Colonic mucosa (tissue), 4 donors: ENCODE measurements at regions of chr5 and their contacts with region 1.

Region 1: DNA sequence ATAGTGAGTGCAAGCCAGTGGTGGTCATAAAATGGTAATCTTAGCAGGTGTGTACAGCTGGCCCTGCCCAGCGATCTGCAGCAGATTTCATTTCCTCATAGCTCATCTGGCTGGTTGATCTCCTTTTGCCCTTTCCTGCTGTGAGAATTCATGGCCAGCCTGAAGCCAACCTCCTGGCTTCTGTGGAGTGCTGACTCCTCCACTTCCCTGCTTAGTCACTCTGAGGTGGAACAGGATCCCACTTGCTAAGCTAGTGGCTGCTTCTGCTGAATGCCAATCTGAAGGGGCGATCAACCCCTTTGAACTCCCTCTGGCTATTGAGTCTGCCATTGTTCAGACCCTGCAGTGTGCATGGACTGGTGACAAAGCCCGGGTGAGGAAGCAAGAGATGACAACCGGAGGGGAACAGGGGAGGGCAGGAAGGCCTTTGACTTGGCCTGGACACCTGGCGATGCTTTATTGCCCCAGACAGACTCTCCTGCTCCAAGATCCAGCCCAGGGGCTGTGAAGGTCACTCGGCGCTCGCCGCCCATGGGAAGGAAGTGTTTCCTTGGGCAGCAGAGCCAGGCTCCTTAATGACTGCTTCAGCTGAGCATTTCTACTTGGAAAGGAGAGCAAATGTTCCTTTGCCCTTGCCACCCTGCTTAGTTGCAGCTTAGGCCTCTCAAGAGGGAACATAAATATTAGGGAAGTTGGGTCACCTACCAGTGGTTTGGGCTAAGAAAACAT is 341.1 kb downstream of the ZSWIM6 start:
- DNase-seq: peak; percentile 71
- H3K4me3 ChIP-seq: no peak overlapping the region
- H3K27ac ChIP-seq: peak overlapping the region; percentile 78
- H3K4me1 ChIP-seq: peaks cover 12% of the 10 kb centered on the region
- H3K27me3 ChIP-seq: no peaks in the 10 kb centered on the region
- CTCF ChIP-seq: no peak

Region 2: DNA sequence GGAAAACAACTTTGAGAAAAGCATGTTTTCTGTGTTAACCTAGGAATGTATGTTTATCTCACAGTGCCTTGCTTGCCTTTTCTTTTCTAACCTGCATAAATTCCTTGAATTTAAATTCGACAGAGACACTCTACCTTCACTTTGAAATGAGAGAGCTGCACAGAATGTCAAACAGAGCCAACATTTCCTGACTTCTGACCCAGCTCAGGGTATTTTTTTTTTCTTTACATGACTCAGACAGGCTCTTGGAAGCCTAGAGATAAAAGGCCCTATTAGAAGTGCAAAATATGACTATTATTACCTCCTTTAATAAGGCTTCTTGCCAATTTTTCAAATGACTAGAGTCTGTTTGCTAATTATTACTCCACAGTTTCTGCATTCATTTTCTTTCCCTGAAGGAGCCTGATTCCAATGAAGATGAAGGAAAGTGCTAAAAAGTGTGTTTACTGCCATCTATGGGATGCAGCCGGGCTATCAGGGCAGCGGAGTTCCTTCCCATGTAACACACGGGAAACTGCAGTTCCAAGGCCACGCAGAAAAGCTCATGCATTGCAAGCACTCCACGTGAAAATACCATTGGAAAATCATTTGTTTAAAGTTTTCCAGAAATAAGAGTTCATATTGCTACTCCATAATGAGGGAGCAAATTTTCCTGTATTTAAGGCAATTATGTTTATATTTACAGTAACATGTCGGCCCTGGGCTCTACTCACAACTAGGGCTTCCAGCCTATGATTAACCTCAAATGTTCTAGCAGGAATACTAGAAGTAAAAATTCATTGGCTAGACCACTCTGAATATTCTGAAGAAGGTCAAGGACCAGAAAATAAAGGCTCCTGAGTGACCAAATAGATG is 144.5 kb after region 1 on chr5:
- intact Hi-C with region 1: loop called (anchors 10 kb)
- DNase-seq: peak; percentile 31
- H3K4me3 ChIP-seq: no peak overlapping the region
- H3K27ac ChIP-seq: no peak overlapping the region
- H3K4me1 ChIP-seq: no peaks in the 10 kb centered on the region
- H3K27me3 ChIP-seq: no peaks in the 10 kb centered on the region
- CTCF ChIP-seq: no peak